K562 (cell line): ENCODE measurements at regions of chr6 and their contacts with region 1.

Region 1: DNA sequence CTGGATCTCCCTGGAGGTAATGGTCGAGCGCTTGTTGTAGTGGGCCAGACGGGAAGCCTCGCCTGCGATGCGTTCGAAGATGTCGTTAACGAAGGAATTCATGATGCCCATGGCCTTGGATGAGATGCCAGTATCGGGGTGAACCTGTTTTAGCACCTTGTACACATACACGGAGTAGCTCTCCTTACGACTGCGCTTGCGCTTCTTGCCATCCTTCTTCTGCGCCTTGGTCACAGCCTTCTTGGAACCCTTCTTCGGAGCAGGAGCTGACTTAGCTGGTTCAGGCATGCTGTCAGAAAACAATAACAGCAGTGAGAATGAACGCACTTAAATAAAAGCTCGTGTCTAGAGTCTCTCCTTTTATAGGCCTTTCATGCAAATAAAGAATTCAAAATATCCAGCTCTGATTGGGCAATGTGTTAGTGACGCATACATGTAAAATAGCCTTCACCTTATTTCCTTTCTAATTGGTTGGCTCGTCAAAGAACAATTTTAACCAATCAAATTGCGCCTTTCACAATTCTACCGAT is 129.2 kb downstream of the HFE start:
- DNase-seq: peak; percentile 83 to 98 (median 90)
- ATAC-seq: peak; percentile 69
- H3K4me3 ChIP-seq: peak overlapping the region; percentile 61
- H3K27ac ChIP-seq: peak overlapping the region; percentile 91
- H3K4me1 ChIP-seq: peaks cover 15 to 23% of the 10 kb centered on the region in 2 experiments
- H3K27me3 ChIP-seq: no peaks in the 10 kb centered on the region
- CTCF ChIP-seq: no peak; a peak in 1 of 6 replicates
- EP300 ChIP-seq: no peak
- POLR2A ChIP-seq: peak; percentile 100
- RAD21 ChIP-seq: no peak; a peak in 1 of 4 replicates

Region 2: DNA sequence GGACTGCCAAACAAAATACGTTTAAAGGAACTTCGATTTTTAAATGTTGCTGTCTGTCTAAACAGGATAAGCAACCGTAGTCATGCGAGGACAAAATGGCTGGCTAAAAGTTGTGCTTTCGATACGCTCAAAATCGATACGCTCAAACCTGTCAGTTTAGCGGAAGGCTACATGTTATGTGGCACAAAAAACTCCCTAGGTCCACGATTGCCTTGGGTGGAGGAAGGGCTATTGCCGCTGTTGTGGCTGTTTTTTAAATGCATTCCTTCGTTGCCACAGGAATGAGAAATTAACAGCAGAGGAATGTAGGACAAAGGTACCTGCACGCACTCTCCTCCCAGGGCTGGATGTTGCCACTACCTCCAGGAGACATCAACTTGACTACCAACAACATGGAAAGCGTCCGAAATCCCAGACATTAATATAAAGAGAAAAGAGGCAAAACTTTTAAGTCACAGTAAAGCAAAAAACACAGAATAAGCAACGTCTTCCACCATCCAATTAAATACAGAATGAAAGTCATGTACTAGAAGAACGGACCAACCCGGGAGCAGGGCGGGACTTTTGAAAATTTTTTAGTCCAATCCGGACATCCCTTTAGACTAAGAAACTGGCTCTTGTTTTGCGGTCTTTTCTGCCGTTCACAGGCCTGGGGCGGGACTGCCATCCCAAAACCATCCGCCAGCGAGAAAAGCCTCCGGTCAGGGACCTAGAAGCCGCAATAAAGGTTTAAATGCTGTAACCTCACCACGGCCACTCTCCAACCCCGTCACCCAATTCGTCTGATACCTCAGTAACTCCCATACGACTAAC is 161.4 kb before region 1 on chr6:
- CTCF ChIA-PET with region 1: no interaction called
- POLR2A ChIA-PET with region 1: interaction called, 12 read pairs
- in situ Hi-C with region 1: no loop called
- intact Hi-C with region 1: loop called (anchors 1 kb)
- DNase-seq: peak; percentile 81 to 95 (median 88)
- ATAC-seq: peak; percentile 68
- H3K4me3 ChIP-seq: peak overlapping the region; percentile 60
- H3K27ac ChIP-seq: peak overlapping the region; percentile 94
- H3K4me1 ChIP-seq: peaks cover 7 to 29% of the 10 kb centered on the region in 2 experiments
- H3K27me3 ChIP-seq: no peaks in the 10 kb centered on the region
- CTCF ChIP-seq: peak; percentile 24 to 42 (median 29); a peak in 3 of 6 replicates
- EP300 ChIP-seq: peak; percentile 34
- POLR2A ChIP-seq: peak; percentile 95
- RAD21 ChIP-seq: peak in 1 of 2 experiments; percentile 59; a peak in 2 of 4 replicates

Region 3: GRCh38 chr6:26183581-26184366 is 32.6 kb before region 1 on chr6:
- CTCF ChIA-PET with region 1: interaction called, 3 read pairs
- POLR2A ChIA-PET with region 1: interaction called, 121 read pairs
- in situ Hi-C with region 1: no loop called
- intact Hi-C with region 1: no loop called
- DNase-seq: no peak
- ATAC-seq: no peak
- H3K4me3 ChIP-seq: no peak overlapping the region
- H3K27ac ChIP-seq: no peak overlapping the region
- H3K4me1 ChIP-seq: peaks cover 0 to 18% of the 10 kb centered on the region in 2 experiments; a peak in 4 of 5 replicates
- H3K27me3 ChIP-seq: no peaks in the 10 kb centered on the region
- CTCF ChIP-seq: no peak
- EP300 ChIP-seq: no peak
- POLR2A ChIP-seq: no peak
- RAD21 ChIP-seq: no peak

Region 4: GRCh38 chr6:26270903-26271667 is 54.7 kb after region 1 on chr6:
- CTCF ChIA-PET with region 1: no interaction called
- POLR2A ChIA-PET with region 1: interaction called, 57 read pairs
- in situ Hi-C with region 1: no loop called
- intact Hi-C with region 1: no loop called
- DNase-seq: no peak
- ATAC-seq: no peak
- H3K4me3 ChIP-seq: no peak overlapping the region
- H3K27ac ChIP-seq: no peak overlapping the region
- H3K4me1 ChIP-seq: peaks cover 0 to 5% of the 10 kb centered on the region in 2 experiments; a peak in 3 of 5 replicates
- H3K27me3 ChIP-seq: no peaks in the 10 kb centered on the region
- CTCF ChIP-seq: no peak
- EP300 ChIP-seq: no peak
- POLR2A ChIP-seq: no peak
- RAD21 ChIP-seq: no peak

Region 5: GRCh38 chr6:26322645-26323482 is 106.4 kb after region 1 on chr6:
- CTCF ChIA-PET with region 1: interaction called, 3 read pairs
- POLR2A ChIA-PET with region 1: interaction called, 197 read pairs
- in situ Hi-C with region 1: no loop called
- intact Hi-C with region 1: no loop called
- DNase-seq: peak in 3 of 4 experiments; percentile 43 to 96 (median 81)
- ATAC-seq: peak; percentile 62
- H3K4me3 ChIP-seq: peak overlapping the region; percentile 59
- H3K27ac ChIP-seq: peak overlapping the region; percentile 75
- H3K4me1 ChIP-seq: peaks cover 8 to 24% of the 10 kb centered on the region in 2 experiments
- H3K27me3 ChIP-seq: no peaks in the 10 kb centered on the region
- CTCF ChIP-seq: no peak
- EP300 ChIP-seq: peak; percentile 54
- POLR2A ChIP-seq: no peak
- RAD21 ChIP-seq: peak in 1 of 2 experiments; percentile 27; a peak in 1 of 4 replicates

Region 6: GRCh38 chr6:26520853-26521599 is 304.6 kb after region 1 on chr6:
- CTCF ChIA-PET with region 1: no interaction called
- POLR2A ChIA-PET with region 1: no interaction called
- in situ Hi-C with region 1: no loop called
- intact Hi-C with region 1: no loop called
- DNase-seq: peak; percentile 94 to 98 (median 98)
- ATAC-seq: peak; percentile 78
- H3K4me3 ChIP-seq: peak overlapping the region; percentile 70
- H3K27ac ChIP-seq: peak overlapping the region; percentile 98
- H3K4me1 ChIP-seq: peaks cover 13 to 28% of the 10 kb centered on the region in 2 experiments; a peak in 4 of 5 replicates
- H3K27me3 ChIP-seq: no peaks in the 10 kb centered on the region
- CTCF ChIP-seq: peak in 1 of 3 experiments; percentile 8; a peak in 2 of 6 replicates
- EP300 ChIP-seq: peak; percentile 68
- POLR2A ChIP-seq: no peak
- RAD21 ChIP-seq: no peak

Region 7: DNA sequence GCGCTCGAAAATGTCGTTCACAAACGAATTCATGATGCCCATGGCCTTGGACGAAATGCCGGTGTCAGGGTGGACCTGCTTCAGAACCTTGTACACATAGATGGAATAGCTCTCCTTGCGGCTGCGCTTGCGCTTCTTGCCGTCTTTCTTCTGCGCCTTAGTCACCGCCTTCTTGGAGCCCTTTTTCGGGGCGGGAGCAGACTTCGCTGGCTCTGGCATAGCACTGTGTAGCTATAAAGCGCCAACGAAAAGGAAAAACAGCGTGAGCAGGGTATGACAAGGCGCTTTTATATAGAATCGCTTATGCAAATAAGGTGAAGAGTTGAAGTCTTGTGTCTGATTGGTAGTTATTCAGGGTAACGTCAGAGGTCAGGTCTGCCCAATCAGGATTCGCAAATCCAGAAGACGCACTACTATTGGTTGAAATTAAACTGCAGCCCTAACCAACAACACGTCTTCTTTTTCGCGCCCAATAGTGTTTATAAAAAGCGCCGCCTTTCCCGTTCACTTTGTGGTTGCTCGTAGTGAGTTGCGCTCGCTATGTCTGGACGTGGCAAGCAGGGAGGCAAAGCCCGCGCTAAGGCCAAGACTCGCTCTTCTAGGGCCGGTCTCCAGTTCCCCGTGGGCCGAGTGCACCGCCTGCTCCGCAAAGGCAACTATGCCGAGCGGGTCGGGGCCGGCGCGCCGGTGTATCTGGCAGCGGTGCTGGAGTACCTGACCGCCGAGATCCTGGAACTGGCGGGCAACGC is 916.3 kb after region 1 on chr6:
- CTCF ChIA-PET with region 1: no interaction called
- POLR2A ChIA-PET with region 1: interaction called, 36 read pairs
- in situ Hi-C with region 1: no loop called
- intact Hi-C with region 1: loop called (anchors 1 kb)
- DNase-seq: peak; percentile 93 to 100 (median 97)
- ATAC-seq: peak; percentile 68
- H3K4me3 ChIP-seq: peak overlapping the region; percentile 72
- H3K27ac ChIP-seq: peak overlapping the region; percentile 98
- H3K4me1 ChIP-seq: peaks cover 6 to 7% of the 10 kb centered on the region in 2 experiments
- H3K27me3 ChIP-seq: no peaks in the 10 kb centered on the region
- CTCF ChIP-seq: peak in 1 of 3 experiments; percentile 7; a peak in 1 of 6 replicates
- EP300 ChIP-seq: peak; percentile 26; the same call in 1 of the 2 replicates
- POLR2A ChIP-seq: peak; percentile 100
- RAD21 ChIP-seq: peak in 1 of 2 experiments; percentile 36; a peak in 2 of 4 replicates